ENCODE measurements at regions of chr22 and their contacts with region 1.

Region 1: GRCh38 chr22:29394931-29395581 is 6.7 kb upstream of the AP1B1 start:
- DNase-seq: peak; percentile 39
- ATAC-seq: peak; percentile 95
- H3K4me3 ChIP-seq: no peak overlapping the region
- H3K27ac ChIP-seq: no peak overlapping the region
- H3K4me1 ChIP-seq: no peaks in the 10 kb centered on the region
- H3K27me3 ChIP-seq: no peaks in the 10 kb centered on the region
- CTCF ChIP-seq: peak; percentile 87

Region 2: GRCh38 chr22:29380181-29380681 is 14.8 kb before region 1 on chr22:
- CTCF ChIA-PET with region 1: no interaction called
- POLR2A ChIA-PET with region 1: no interaction called
- in situ Hi-C with region 1: no loop called
- intact Hi-C with region 1: no loop called
- DNase-seq: no peak
- ATAC-seq: 0 out of 2 replicates have a peak, but pooled peaks have one; percentile 42
- H3K4me3 ChIP-seq: no peak overlapping the region
- H3K27ac ChIP-seq: no peak overlapping the region
- H3K4me1 ChIP-seq: no peaks in the 10 kb centered on the region
- H3K27me3 ChIP-seq: no peaks in the 10 kb centered on the region
- CTCF ChIP-seq: no peak

Region 3: GRCh38 chr22:29512031-29512430 is 117.0 kb after region 1 on chr22:
- CTCF ChIA-PET with region 1: no interaction called
- POLR2A ChIA-PET with region 1: no interaction called
- in situ Hi-C with region 1: no loop called
- intact Hi-C with region 1: no loop called
- DNase-seq: no peak
- ATAC-seq: no peak
- H3K4me3 ChIP-seq: no peak overlapping the region
- H3K27ac ChIP-seq: no peak overlapping the region
- H3K4me1 ChIP-seq: no peaks in the 10 kb centered on the region
- H3K27me3 ChIP-seq: no peaks in the 10 kb centered on the region
- CTCF ChIP-seq: no peak

Region 4: GRCh38 chr22:29524440-29525191 is 129.6 kb after region 1 on chr22:
- CTCF ChIA-PET with region 1: no interaction called
- POLR2A ChIA-PET with region 1: no interaction called
- in situ Hi-C with region 1: no loop called
- intact Hi-C with region 1: loop called (anchors 5 kb)
- DNase-seq: peak; percentile 10
- ATAC-seq: peak; percentile 89
- H3K4me3 ChIP-seq: no peak overlapping the region
- H3K27ac ChIP-seq: no peak overlapping the region
- H3K4me1 ChIP-seq: no peaks in the 10 kb centered on the region
- H3K27me3 ChIP-seq: no peaks in the 10 kb centered on the region
- CTCF ChIP-seq: no peak; the same call in 1 of the 2 replicates

Measured in Panc1 (cell line).